ENCODE measurements at regions of chr14 and their contacts with region 1.

Region 1: GRCh38 chr14:69138189-69138535 is 14.8 kb downstream of the DCAF5 start:
- DNase-seq: no peak
- ATAC-seq: no peak
- H3K4me3 ChIP-seq: no peak overlapping the region
- H3K27ac ChIP-seq: no peak overlapping the region
- H3K4me1 ChIP-seq: peaks cover 23% of the 10 kb centered on the region
- H3K27me3 ChIP-seq: no peaks in the 10 kb centered on the region
- CTCF ChIP-seq: no peak

Region 2: DNA sequence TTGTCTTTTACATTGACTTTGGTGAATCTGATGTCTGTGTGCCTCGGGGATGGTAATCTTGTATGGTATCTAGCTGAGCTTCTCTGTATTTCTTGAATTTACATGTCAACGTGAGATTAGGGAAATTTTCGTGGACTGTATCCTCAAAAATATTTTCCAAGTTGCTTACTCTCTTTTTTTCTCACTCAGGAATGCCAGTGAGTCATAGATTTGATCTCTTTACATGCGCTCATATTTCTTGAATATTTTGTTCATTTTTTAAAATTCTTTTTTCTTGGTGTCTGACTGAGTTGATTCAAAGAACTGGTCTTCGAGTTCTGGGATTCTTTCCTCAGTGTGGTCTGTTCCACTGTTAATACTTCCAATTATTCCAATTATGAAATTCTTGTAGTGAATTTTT is 1110.9 kb before region 1 on chr14:
- CTCF ChIA-PET with region 1: no interaction called
- POLR2A ChIA-PET with region 1: interaction called, 14 read pairs
- intact Hi-C with region 1: no loop called
- DNase-seq: peak; percentile 25
- ATAC-seq: no peak
- H3K4me3 ChIP-seq: no peak overlapping the region
- H3K27ac ChIP-seq: no peak overlapping the region
- H3K4me1 ChIP-seq: peaks cover 6% of the 10 kb centered on the region; the same call in 1 of the 2 replicates
- H3K27me3 ChIP-seq: no peaks in the 10 kb centered on the region
- CTCF ChIP-seq: no peak

Measured in PC-3 (cell line).